ENCODE measurements at regions of chr1 and their contacts with region 1.

Region 1: DNA sequence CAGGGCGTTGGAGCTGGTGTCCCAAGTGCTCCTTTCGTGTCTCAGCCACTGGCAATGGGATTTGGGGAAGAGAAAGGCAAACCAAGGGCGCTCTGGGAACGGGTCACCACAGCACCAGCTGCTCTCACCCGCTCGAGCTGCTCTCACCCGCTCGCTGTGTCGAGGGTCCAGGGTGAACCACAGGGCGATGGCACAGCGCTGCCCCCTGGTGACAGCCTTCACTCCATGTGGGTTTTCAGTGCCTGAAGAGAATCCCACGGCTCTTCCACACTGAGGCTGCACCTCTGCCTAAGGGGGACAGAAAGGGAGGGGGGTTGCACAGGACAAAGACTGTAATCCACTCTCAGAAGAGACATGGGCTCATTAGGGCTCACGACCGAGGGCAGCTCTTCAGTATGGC is 7.1 kb upstream of the CLDN19 start:
- DNase-seq: no peak
- ATAC-seq: peak; percentile 70

Region 2: GRCh38 chr1:42586016-42586415 is 161.1 kb before region 1 on chr1:
- intact Hi-C with region 1: loop called (anchors 10 kb)
- DNase-seq: no peak
- ATAC-seq: no peak

Region 3: GRCh38 chr1:42660907-42661500 is 86.1 kb before region 1 on chr1:
- intact Hi-C with region 1: loop called (anchors 10 kb)
- DNase-seq: no peak
- ATAC-seq: no peak

Region 4: DNA sequence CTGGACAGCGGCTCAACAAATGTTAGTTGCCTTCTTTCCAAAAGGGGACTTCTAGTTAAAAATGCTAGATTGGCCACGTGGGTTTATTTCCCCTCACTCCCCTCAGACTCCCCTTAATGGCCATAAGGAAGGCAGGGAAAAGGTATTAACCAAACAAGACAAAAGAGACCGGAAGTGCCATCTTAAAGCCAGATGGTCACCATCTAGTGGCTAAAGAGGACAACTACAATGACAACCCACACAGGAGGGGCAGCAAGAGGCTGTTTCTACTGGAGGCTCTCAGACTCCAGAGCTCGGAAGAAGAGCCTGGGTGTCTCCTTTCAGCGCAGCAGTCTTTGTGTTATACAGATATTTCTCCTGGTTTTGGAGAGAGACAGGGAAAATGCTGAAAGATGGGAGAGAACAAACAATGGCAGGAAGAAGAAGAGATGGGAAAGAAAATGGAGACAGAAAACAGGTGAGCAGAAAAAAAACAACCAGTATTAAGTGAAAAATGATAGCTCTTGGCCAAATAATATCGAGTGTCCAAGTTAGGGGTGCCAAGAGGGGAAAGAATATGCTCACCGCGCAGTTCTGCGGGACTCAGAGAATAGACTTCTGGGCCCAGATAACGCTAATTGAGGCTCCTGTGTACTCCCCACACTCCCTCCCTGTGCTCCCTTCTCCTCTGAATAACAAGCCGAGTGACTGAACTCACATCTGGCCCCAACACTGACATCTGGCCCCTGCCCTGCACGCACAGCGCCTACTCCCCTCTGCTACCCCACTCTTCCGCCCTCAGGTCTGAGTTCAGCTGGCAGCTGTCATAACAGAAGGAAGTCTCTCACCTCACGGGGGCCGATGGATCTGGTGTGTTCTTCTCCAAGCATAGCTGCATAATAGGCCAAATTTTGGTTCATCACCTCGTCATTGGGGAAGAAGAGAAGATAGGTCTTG is 10.1 kb after region 1 on chr1:
- intact Hi-C with region 1: no loop called
- DNase-seq: no peak
- ATAC-seq: peak; percentile 61

Measured in sciatic nerve (tissue), 2 donors.